ENCODE measurements at regions of chr4 and their contacts with region 1.

Region 1: GRCh38 chr4:78951862-78952472 is 12.7 kb upstream of the PAQR3 start:
- DNase-seq: no peak
- H3K4me3 ChIP-seq: no peak overlapping the region
- H3K27ac ChIP-seq: no peak overlapping the region
- H3K4me1 ChIP-seq: no peaks in the 10 kb centered on the region
- H3K27me3 ChIP-seq: no peaks in the 10 kb centered on the region
- CTCF ChIP-seq: peak; percentile 53 to 69 (median 64)
- EP300 ChIP-seq: no peak
- POLR2A ChIP-seq: no peak

Region 2: DNA sequence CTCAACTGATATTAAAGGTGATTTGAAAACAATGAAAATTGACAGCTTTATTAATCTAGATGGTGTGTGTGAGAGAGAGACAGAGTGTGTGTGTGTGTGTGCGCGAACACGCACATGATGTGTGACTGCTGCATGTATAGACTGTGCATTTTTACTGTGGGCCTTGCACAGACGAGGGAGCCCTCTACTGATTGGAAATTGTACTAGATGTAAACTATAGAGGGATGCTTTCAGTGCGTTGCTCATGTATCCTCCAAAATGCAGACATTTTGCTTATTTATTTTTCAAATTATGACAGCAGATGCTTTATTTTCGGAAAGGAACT is 624.4 kb after region 1 on chr4:
- intact Hi-C with region 1: loop called (anchors 10 kb)
- DNase-seq: no peak
- H3K4me3 ChIP-seq: no peak overlapping the region
- H3K27ac ChIP-seq: peak overlapping the region in 3 of 4 donors; percentile 0 to 61 (median 54)
- H3K4me1 ChIP-seq: peaks cover 0 to 19% (median 9%) of the 10 kb centered on the region in 4 donors
- H3K27me3 ChIP-seq: no peaks in the 10 kb centered on the region
- CTCF ChIP-seq: peak in 3 of 4 experiments; percentile 31 to 39 (median 36)
- EP300 ChIP-seq: no peak
- POLR2A ChIP-seq: no peak

Region 3: DNA sequence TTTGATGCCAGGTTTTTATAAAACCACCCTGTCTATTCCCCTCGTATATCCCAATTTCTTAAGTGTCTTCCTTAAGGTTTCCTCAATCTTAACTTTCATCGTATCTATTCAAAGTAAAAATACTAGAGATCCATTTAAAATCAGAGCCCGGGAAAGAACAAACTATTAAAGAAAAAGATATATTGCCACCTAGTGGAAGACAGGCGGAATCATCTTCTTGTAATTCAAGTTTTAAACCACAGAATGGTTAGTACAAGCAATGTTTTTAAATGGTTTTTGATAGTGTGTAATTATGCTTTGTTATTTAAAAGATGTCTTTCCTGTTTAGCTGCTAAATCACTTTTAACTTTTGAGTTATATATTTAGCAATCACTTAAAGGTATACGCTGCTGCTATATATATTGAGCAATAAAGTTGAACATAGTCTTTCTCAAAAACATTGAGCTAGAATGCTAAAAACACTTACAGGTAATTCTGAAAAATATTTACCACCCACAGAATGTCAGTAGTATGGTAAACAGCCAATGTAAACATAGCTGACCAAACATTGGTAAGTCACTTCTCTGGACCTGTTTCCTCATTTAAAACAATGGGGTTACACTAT is 1263.6 kb after region 1 on chr4:
- intact Hi-C with region 1: loop called (anchors 2 kb)
- DNase-seq: no peak
- H3K4me3 ChIP-seq: peak overlapping the region in 1 of 4 donors; percentile 10
- H3K27ac ChIP-seq: no peak overlapping the region
- H3K4me1 ChIP-seq: peaks cover 0 to 7% (median 0%) of the 10 kb centered on the region in 4 donors
- H3K27me3 ChIP-seq: no peaks in the 10 kb centered on the region
- CTCF ChIP-seq: peak; percentile 23 to 70 (median 46)
- EP300 ChIP-seq: no peak
- POLR2A ChIP-seq: no peak

Measured in sigmoid colon (tissue), 7 donors.